ENCODE measurements at regions of chr10 and their contacts with region 1.

Region 1: GRCh38 chr10:102802920-102803534 is 34.2 kb downstream of the CYP17A1 start:
- DNase-seq: peak in 1 of 2 donors; percentile 61
- ATAC-seq: peak; percentile 29 to 84 (median 62)
- H3K4me3 ChIP-seq: no peak overlapping the region
- H3K27ac ChIP-seq: peak overlapping the region; percentile 29 to 95 (median 75)
- H3K4me1 ChIP-seq: peaks cover 31 to 87% (median 57%) of the 10 kb centered on the region in 9 donors
- H3K27me3 ChIP-seq: no peaks in the 10 kb centered on the region
- CTCF ChIP-seq: peak in 1 of 9 donors; percentile 15

Region 2: GRCh38 chr10:102752934-102753664 is 49.9 kb before region 1 on chr10:
- intact Hi-C with region 1: loop called in 2 of 10 experiments (anchors 5 kb)
- DNase-seq: peak in 1 of 2 donors; percentile 30
- ATAC-seq: peak; percentile 63 to 81 (median 76)
- H3K4me3 ChIP-seq: no peak overlapping the region
- H3K27ac ChIP-seq: peak overlapping the region; percentile 9 to 86 (median 72)
- H3K4me1 ChIP-seq: peaks cover 13 to 56% (median 26%) of the 10 kb centered on the region in 9 donors
- H3K27me3 ChIP-seq: no peaks in the 10 kb centered on the region
- CTCF ChIP-seq: peak; percentile 33 to 75 (median 59)

Region 3: DNA sequence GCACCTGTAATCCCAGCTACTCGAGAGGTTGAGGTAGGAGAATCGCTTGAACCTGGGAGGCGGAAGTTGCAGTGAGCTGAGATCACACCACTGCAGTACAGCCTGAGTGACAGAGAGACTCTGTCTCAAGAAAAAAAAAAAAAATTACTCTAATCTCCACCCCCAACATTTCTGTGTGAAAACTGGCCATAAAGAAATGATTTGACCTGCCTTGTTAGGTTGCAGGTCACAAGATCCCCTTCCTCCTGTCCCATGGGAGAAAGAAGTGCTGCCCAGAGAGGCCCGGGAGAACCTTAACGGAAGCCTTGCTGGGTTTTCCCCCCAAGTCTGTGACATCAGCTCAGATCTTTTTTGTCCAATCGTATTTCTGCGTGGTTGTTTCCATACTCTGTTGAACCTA is 664.4 kb after region 1 on chr10:
- intact Hi-C with region 1: no loop called
- DNase-seq: no peak
- ATAC-seq: no peak
- H3K4me3 ChIP-seq: no peak overlapping the region
- H3K27ac ChIP-seq: no peak overlapping the region
- H3K4me1 ChIP-seq: peaks cover 0 to 45% (median 0%) of the 10 kb centered on the region in 9 donors
- H3K27me3 ChIP-seq: no peaks in the 10 kb centered on the region
- CTCF ChIP-seq: no peak

Measured in heart right ventricle (tissue), 16 donors.